ENCODE measurements at regions of chr15 and their contacts with region 1.

Region 1: GRCh38 chr15:69713726-69714559 is 261.3 kb downstream of the RPLP1 start:
- DNase-seq: peak; percentile 91
- ATAC-seq: peak; percentile 93
- H3K4me3 Mint-ChIP-seq: no peak overlapping the region
- H3K27ac Mint-ChIP-seq: peak overlapping the region; percentile 83
- H3K4me1 Mint-ChIP-seq: peaks cover 61% of the 10 kb centered on the region
- H3K27me3 Mint-ChIP-seq: no peaks in the 10 kb centered on the region
- CTCF ChIP-seq: no peak

Region 2: GRCh38 chr15:69679623-69680228 is 34.2 kb before region 1 on chr15:
- CTCF ChIA-PET with region 1: interaction called, 6 read pairs
- POLR2A ChIA-PET with region 1: interaction called, 4 read pairs
- intact Hi-C with region 1: loop called (anchors 5 kb)
- DNase-seq: peak; percentile 89
- ATAC-seq: peak; percentile 95
- H3K4me3 Mint-ChIP-seq: peak overlapping the region; percentile 14
- H3K27ac Mint-ChIP-seq: peak overlapping the region; percentile 35
- H3K4me1 Mint-ChIP-seq: peaks cover 25% of the 10 kb centered on the region
- H3K27me3 Mint-ChIP-seq: peaks cover 11% of the 10 kb centered on the region
- CTCF ChIP-seq: no peak

Region 3: GRCh38 chr15:69697916-69698315 is 16.0 kb before region 1 on chr15:
- CTCF ChIA-PET with region 1: no interaction called
- POLR2A ChIA-PET with region 1: no interaction called
- intact Hi-C with region 1: no loop called
- DNase-seq: no peak
- ATAC-seq: no peak
- H3K4me3 Mint-ChIP-seq: no peak overlapping the region
- H3K27ac Mint-ChIP-seq: no peak overlapping the region
- H3K4me1 Mint-ChIP-seq: peaks cover 5% of the 10 kb centered on the region
- H3K27me3 Mint-ChIP-seq: peaks cover 1% of the 10 kb centered on the region
- CTCF ChIP-seq: no peak

Region 4: GRCh38 chr15:69760890-69761568 is 47.1 kb after region 1 on chr15:
- CTCF ChIA-PET with region 1: interaction called, 4 read pairs
- POLR2A ChIA-PET with region 1: interaction called, 13 read pairs
- intact Hi-C with region 1: loop called (anchors 2 kb)
- DNase-seq: peak; percentile 92
- ATAC-seq: peak; percentile 50
- H3K4me3 Mint-ChIP-seq: peak overlapping the region; percentile 16
- H3K27ac Mint-ChIP-seq: peak overlapping the region; percentile 83
- H3K4me1 Mint-ChIP-seq: peaks cover 68% of the 10 kb centered on the region
- H3K27me3 Mint-ChIP-seq: peaks cover 1% of the 10 kb centered on the region
- CTCF ChIP-seq: no peak

Measured in activated CD8-positive, alpha-beta T cell treated with anti-CD3 and anti-CD28 coated beads for 36 hours (primary cell).